Activated CD4-positive, alpha-beta T cell treated with anti-CD3 and anti-CD28 coated beads for 36 hours (primary cell): ENCODE measurements at regions of chr13 and their contacts with region 1.

Region 1: DNA sequence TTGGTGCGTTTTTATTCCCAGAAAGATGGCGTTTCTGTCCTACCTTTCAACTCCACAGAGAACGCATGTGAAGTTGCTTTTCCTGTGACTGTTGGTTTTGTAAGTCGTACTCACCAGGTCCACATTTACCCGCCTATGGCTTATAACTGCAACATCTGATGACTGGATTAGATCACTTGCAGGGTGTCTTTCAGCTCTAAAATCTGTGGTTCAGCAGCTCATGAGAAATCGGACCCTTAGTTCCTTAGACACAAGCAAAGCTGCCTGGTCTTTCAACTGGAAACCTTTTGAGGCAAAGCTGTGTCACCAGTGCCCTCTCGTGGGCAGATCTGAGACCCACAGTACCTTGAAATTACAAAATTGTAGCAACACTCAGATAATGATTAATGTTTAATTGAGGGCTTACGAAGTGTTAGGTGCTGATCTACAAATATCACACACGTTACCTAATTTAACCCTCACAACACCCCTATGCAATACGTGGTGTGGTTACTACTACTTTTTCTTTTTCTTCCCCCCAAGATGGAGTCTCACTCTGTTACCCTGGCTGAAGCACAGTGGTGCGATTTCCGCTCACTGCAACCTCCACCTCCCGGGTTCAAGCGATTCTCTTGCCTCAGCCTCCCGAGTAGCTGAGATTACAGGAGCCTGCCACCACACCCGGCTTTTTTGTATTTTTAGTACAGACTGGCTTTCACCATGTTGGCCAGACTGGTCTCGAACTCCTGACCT is 65.4 kb downstream of the RUBCNL start:
- DNase-seq: peak; percentile 87
- ATAC-seq: peak; percentile 87
- H3K4me3 Mint-ChIP-seq: peak overlapping the region; percentile 77
- H3K27ac Mint-ChIP-seq: peak overlapping the region; percentile 94
- H3K4me1 Mint-ChIP-seq: peaks cover 37% of the 10 kb centered on the region
- H3K27me3 Mint-ChIP-seq: no peaks in the 10 kb centered on the region

Region 2: GRCh38 chr13:45521297-45521696 is 800.4 kb before region 1 on chr13:
- CTCF ChIA-PET with region 1: no interaction called
- POLR2A ChIA-PET with region 1: no interaction called
- intact Hi-C with region 1: no loop called
- DNase-seq: no peak
- ATAC-seq: no peak
- H3K4me3 Mint-ChIP-seq: no peak overlapping the region
- H3K27ac Mint-ChIP-seq: peak overlapping the region; percentile 45
- H3K4me1 Mint-ChIP-seq: peaks cover 38% of the 10 kb centered on the region
- H3K27me3 Mint-ChIP-seq: no peaks in the 10 kb centered on the region

Region 3: GRCh38 chr13:45623515-45624090 is 698.1 kb before region 1 on chr13:
- CTCF ChIA-PET with region 1: no interaction called
- POLR2A ChIA-PET with region 1: no interaction called
- intact Hi-C with region 1: loop called (anchors 2 kb)
- DNase-seq: peak; percentile 18
- ATAC-seq: peak; percentile 26
- H3K4me3 Mint-ChIP-seq: no peak overlapping the region
- H3K27ac Mint-ChIP-seq: no peak overlapping the region
- H3K4me1 Mint-ChIP-seq: no peaks in the 10 kb centered on the region
- H3K27me3 Mint-ChIP-seq: peaks cover 37% of the 10 kb centered on the region

Region 4: DNA sequence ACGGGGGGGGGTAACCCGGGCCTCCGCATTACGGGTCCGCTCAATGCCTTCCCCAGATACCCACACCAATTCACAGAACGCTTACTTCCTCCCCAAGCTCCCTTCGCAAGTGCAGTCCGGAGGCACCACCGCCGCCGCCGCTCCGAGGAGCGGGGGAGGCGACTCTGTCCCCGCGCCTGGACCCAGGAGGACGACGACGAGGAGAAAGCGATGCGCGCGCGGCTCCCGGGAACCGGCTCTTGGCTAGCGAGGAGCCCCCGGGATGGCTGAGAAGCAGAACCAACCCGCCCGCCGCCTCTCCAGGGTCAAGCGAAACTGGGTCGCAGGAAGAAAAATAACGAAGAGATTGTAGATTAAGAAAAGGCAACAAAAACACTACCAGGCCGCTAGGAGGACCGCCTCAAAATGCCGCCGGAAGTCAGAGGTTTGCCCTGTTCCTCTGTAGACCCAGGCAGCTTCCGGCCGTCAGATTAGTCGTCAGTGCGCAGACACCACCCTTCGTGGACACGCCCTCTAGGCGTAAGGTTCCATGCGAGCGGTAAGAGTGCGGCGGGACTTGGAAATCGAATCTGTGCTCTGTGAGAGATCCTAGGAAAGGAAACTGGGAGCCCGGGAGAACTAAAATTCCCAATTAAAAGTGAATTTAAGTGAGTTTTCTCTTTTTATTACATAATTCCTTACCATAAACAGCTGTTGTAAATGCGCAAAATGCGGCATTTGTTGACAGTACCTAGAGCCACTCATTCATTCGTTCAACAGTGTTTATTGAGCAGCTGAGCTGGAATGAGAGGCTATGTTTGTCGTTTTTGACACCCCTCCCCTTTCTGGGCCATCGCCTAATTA is 269.1 kb before region 1 on chr13 and contains the start of gene ZC3H13:
- CTCF ChIA-PET with region 1: interaction called, 4 read pairs
- POLR2A ChIA-PET with region 1: no interaction called
- intact Hi-C with region 1: loop called (anchors 1 to 5 kb)
- DNase-seq: peak; percentile 96
- ATAC-seq: peak; percentile 99
- H3K4me3 Mint-ChIP-seq: peak within 1 kb of the TSS; percentile 83
- H3K27ac Mint-ChIP-seq: peak within 1 kb of the TSS; percentile 94
- H3K4me1 Mint-ChIP-seq: peaks cover 34% of the 10 kb centered on the region
- H3K27me3 Mint-ChIP-seq: peaks cover 2% of the 10 kb centered on the region
- total RNA-seq, gene ZC3H13: 38.5 to 52.8 TPM

Region 5: GRCh38 chr13:46088821-46089562 is 232.7 kb before region 1 on chr13:
- CTCF ChIA-PET with region 1: no interaction called
- POLR2A ChIA-PET with region 1: no interaction called
- intact Hi-C with region 1: no loop called
- DNase-seq: no peak
- ATAC-seq: no peak
- H3K4me3 Mint-ChIP-seq: no peak overlapping the region
- H3K27ac Mint-ChIP-seq: no peak overlapping the region
- H3K4me1 Mint-ChIP-seq: no peaks in the 10 kb centered on the region
- H3K27me3 Mint-ChIP-seq: peaks cover 8% of the 10 kb centered on the region

Region 6: GRCh38 chr13:46168341-46168740 is 153.3 kb before region 1 on chr13:
- CTCF ChIA-PET with region 1: interaction called, 18 read pairs
- POLR2A ChIA-PET with region 1: interaction called, 4 read pairs
- intact Hi-C with region 1: no loop called
- DNase-seq: peak; percentile 82
- ATAC-seq: peak; percentile 59
- H3K4me3 Mint-ChIP-seq: peak overlapping the region; percentile 67
- H3K27ac Mint-ChIP-seq: peak overlapping the region; percentile 85
- H3K4me1 Mint-ChIP-seq: peaks cover 95% of the 10 kb centered on the region
- H3K27me3 Mint-ChIP-seq: no peaks in the 10 kb centered on the region

Region 7: DNA sequence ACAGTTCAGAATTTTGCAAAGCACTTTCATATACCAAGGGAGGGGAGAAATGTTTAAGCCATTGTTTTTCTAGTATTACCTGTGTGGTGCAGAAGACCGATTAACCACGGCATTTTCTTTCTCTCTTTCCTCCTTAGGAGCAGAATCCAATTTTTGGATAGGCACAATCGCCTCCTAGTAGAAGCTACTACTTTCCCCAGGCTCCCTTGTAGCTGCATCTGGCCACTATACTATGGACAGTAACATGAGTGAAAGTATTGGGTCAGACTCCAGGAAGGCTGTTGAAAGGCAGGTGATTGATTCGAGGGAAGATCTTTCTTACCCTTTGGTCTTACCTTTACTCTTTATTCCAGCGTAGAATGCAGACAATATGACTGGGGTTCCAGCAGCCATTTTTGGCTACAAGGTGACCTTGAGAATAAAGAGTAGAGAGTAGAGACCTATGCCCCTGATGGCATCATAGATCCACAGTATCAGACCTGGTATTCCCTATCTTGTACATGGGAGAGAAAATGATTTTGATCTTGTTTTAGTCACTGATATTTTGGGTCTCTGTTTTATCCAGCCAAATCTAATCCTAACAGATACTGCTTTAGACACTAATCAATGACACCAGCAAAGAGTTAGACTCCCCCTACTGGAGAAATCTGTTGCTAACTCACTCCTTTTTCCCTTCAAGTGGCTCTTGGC is 32.9 kb before region 1 on chr13:
- CTCF ChIA-PET with region 1: interaction called, 35 read pairs
- POLR2A ChIA-PET with region 1: interaction called, 3 read pairs
- intact Hi-C with region 1: loop called (anchors 1 to 5 kb)
- DNase-seq: no peak
- ATAC-seq: peak; percentile 82
- H3K4me3 Mint-ChIP-seq: no peak overlapping the region
- H3K27ac Mint-ChIP-seq: no peak overlapping the region
- H3K4me1 Mint-ChIP-seq: peaks cover 27% of the 10 kb centered on the region
- H3K27me3 Mint-ChIP-seq: no peaks in the 10 kb centered on the region

Region 8: DNA sequence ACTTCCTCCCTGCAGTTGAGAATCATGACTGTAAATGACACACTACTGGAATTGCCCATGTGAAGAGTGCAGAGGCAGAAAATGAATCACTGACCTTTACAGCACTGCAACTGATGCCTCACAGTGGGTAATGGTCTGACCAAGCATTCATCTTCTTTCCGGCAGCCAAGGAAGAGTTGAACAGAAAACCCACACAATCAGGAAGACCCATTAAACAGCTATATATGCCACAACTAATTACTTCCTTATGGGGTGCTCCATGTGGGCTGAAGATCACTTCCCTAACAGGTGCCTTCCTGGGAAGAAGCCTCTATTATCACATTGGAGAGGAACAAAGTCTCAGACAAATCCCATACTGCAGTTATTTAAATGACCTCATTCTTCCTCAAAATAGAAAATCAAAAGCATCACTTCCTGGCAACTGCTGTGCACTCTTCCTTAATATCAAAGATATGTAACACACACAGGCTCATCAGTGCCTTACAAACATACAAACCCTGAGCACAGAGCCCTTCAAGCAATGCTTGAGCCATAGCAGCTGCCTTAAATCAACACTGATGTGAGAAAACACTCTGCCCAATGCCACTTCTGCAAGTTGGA is 19.6 kb after region 1 on chr13:
- CTCF ChIA-PET with region 1: interaction called, 8 read pairs
- POLR2A ChIA-PET with region 1: interaction called, 3 read pairs
- intact Hi-C with region 1: loop called in 1 of 2 experiments (anchors 2 kb)
- DNase-seq: peak; percentile 69
- ATAC-seq: peak; percentile 96
- H3K4me3 Mint-ChIP-seq: peak overlapping the region; percentile 67
- H3K27ac Mint-ChIP-seq: peak overlapping the region; percentile 95
- H3K4me1 Mint-ChIP-seq: peaks cover 45% of the 10 kb centered on the region
- H3K27me3 Mint-ChIP-seq: peaks cover 2% of the 10 kb centered on the region